Aorta (tissue), 5 donors: ENCODE measurements at regions of chr13 and their contacts with region 1.

Region 1: DNA sequence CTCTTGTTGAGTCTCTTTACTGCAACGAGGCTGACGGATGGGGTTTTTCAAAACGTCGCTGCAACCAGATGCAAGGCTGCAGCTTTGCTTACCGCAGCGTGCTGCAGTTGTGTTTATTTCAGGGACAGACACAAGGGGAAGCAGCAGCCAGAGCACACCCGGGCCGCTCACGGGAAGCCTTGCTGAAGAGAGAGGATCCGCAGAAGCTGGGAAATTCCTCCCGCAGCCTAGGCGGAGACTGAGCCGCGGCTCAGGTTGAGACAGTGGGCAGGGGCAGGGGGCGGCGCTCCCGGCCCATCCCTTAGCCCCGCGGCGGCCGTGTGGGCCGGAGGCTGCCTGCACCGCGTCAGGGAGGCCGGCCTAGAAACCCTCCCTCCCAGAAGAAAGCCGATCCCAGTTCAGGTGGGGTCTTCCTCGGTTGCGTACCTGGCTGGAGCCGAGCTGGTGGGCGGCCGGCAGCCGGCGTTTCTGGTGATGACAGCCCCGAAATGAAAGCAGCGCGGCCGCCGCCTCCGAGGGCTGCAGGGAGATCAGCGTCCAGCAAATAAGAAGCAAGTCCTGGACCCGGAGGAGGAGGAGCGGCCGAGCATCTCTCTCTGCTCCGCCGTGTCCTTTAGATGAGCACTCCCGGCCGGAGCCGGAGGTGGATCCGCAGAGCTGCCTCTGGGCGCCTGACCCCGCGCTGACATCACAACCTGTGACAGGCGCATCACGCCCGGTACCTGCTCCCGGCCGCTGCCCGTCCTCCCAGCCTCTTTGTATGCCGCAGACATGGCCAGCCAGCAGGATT is at the start of gene FRY:
- DNase-seq: peak; percentile 76 to 86
- ATAC-seq: peak; percentile 85
- H3K4me3 ChIP-seq: peak within 1 kb of the TSS; percentile 69 to 86
- H3K27ac ChIP-seq: peak within 1 kb of the TSS; percentile 9 to 46
- H3K4me1 ChIP-seq: peaks cover under 1 to 3% of the 10 kb centered on the region in 2 donors
- H3K27me3 ChIP-seq: no peaks in the 10 kb centered on the region
- total RNA-seq, gene FRY: 141 to 328 TPM

Region 2: GRCh38 chr13:31880851-31881499 is 150.2 kb before region 1 on chr13:
- intact Hi-C with region 1: no loop called
- DNase-seq: no peak
- ATAC-seq: no peak
- H3K4me3 ChIP-seq: no peak overlapping the region
- H3K27ac ChIP-seq: no peak overlapping the region
- H3K4me1 ChIP-seq: peaks cover 0 to 2% of the 10 kb centered on the region in 2 donors
- H3K27me3 ChIP-seq: no peaks in the 10 kb centered on the region

Region 3: DNA sequence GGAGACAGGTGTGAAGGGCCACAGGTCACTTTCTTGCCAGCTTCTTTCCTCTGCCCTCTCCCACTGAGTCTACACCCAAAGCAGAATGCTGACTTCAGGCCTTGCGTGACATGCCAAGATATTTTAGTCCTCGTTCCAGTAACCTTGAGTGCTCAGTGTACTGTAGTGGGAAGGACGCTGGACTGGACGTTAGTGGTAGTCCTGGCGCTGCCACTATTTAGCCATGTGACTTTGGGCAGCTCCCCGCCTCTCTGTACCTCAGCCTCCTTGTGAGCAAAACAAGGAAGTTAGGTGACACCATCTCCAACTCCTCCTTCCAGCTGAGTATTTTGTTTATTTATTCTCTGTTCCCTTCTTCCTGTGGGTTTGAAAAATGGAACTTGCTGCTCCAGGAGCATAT is 86.5 kb after region 1 on chr13:
- intact Hi-C with region 1: loop called in 1 of 2 experiments (anchors 5 kb)
- DNase-seq: peak; percentile 67 to 83
- ATAC-seq: peak; percentile 88
- H3K4me3 ChIP-seq: no peak overlapping the region
- H3K27ac ChIP-seq: peak overlapping the region; percentile 52 to 59
- H3K4me1 ChIP-seq: peaks cover 2% of the 10 kb centered on the region in 2 donors
- H3K27me3 ChIP-seq: no peaks in the 10 kb centered on the region